Esophagus muscularis mucosa (tissue), 4 donors: ENCODE measurements at regions of chr1 and their contacts with region 1.

Region 1: GRCh38 chr1:182781841-182782586 is 7.6 kb upstream of the NPL start:
- DNase-seq: no peak
- H3K4me3 ChIP-seq: no peak overlapping the region
- H3K27ac ChIP-seq: no peak overlapping the region
- H3K4me1 ChIP-seq: peaks cover 0 to 5% (median 0%) of the 10 kb centered on the region in 4 donors
- H3K27me3 ChIP-seq: no peaks in the 10 kb centered on the region
- CTCF ChIP-seq: peak; percentile 60 to 71 (median 64)
- EP300 ChIP-seq: no peak
- POLR2A ChIP-seq: no peak

Region 2: DNA sequence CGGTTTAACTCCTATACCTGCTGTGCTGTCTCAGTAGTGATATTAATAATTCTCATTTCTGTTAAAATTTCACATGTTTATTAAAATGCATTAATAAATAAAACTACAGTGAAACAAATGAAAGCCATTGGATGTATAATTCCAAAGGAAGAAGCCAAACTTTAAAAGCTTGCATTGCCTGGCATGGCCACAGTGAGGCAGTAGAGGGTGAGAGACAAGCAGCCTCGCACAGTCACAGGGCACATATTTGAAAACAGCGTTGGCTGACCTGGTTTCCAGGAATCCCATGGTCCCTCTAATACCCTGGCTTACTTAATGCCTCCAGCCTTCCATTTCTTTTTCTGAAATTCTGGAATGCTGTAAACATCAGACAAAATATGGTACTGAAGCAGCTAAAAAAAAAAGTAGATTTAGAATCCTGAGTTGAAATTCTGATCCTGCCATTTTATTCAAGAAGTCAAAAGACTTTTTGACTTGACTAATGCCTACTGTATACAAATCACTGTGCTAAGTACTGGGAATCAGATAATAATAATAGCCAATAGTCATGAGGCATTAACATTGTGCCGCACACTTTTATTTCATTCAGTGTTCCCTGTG is 186.3 kb before region 1 on chr1:
- intact Hi-C with region 1: loop called (anchors 1 kb)
- DNase-seq: no peak
- H3K4me3 ChIP-seq: no peak overlapping the region
- H3K27ac ChIP-seq: peak overlapping the region in 1 of 4 donors; percentile 4
- H3K4me1 ChIP-seq: peaks cover 5 to 15% (median 12%) of the 10 kb centered on the region in 4 donors
- H3K27me3 ChIP-seq: no peaks in the 10 kb centered on the region
- CTCF ChIP-seq: peak; percentile 84 to 89 (median 86)
- EP300 ChIP-seq: no peak
- POLR2A ChIP-seq: no peak

Region 3: GRCh38 chr1:182720463-182720862 is 61.6 kb before region 1 on chr1:
- intact Hi-C with region 1: no loop called
- DNase-seq: no peak
- H3K4me3 ChIP-seq: no peak overlapping the region
- H3K27ac ChIP-seq: no peak overlapping the region
- H3K4me1 ChIP-seq: no peaks in the 10 kb centered on the region
- H3K27me3 ChIP-seq: no peaks in the 10 kb centered on the region
- CTCF ChIP-seq: peak in 1 of 3 experiments; percentile 27
- EP300 ChIP-seq: no peak
- POLR2A ChIP-seq: no peak